ENCODE measurements at regions of chr1 and their contacts with region 1.

Region 1: DNA sequence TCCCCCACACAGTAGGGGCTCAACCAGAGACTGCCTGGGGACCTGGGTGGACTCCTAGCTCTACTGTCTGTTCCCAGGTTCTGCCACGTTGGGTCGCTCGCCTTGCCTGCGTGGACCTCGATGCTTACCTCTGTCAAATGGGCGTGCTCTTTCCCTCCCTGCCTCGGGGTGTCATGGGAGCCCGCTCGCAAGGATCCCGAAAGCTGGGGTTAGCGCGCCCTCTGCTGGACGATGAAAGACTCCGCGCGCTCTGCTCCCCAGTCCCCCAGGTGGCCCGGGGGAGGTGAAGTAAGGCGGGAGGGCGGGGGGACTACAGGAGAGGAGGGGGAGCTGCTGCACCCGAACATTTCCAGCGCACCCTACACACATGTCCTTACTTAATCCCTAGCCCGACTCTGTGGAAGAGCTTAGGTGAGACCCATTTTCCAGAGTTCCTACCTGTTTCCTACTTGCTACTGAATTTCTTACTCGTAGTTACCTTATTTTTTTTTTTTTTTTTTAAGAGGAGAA is 2.3 kb upstream of the BSND start:
- DNase-seq: peak; percentile 57 to 79
- ATAC-seq: peak; percentile 52 to 86 (median 78)
- H3K4me3 ChIP-seq: peak overlapping the region in 1 of 10 donors; percentile 5
- H3K27ac ChIP-seq: no peak overlapping the region
- H3K4me1 ChIP-seq: peaks cover 0 to 11% (median 5%) of the 10 kb centered on the region in 9 donors
- H3K27me3 ChIP-seq: peaks cover 17 to 59% (median 46%) of the 10 kb centered on the region in 7 donors
- CTCF ChIP-seq: peak; percentile 48 to 84 (median 74)

Region 2: DNA sequence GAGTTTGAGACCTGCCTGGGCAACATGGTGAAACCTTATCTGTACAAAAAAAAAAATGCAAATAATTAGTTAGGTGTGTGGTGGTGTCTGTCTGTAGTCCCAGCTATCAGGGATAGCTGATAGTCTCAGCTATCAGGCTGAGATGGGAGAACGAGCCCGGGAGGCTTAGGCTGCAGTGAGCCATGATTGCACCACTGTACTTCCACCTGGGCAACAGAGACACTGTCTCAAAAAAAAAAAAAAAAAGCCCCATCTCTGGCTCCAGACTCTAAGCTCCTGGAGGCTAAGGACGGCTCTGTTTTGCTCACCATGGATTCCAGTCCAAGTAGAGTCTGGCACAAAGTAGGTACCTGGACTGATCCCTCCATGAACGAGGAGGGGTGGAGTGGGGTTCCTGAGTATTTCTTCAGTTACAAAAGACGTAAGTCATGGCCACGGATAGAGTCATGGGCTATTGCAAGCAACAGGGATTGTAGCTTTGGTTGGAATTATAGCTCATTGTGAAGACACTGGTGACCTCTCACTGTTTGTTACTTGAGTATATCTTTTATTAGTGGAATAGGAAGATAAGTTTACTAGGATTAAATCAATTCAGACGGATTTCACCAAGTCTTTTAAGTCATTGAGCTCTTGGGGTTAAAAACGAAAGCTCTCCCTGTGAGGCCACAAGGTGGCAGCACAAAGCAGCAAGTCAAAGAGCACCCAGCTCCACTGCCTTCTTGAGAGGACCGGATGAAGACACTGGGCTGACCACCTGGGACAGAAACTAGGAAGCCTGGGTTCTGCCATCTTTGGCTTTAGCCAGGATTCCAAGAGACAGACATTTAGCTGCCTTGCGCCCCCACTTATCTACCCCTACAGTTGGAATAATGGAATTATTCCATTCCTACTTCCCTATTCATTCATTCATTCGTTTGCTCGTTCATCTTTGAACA is 51.5 kb before region 1 on chr1:
- intact Hi-C with region 1: loop called in 9 of 10 experiments (anchors 1 to 5 kb)
- DNase-seq: peak; percentile 52 to 69
- ATAC-seq: peak in 7 of 8 donors; percentile 71 to 85 (median 77)
- H3K4me3 ChIP-seq: peak overlapping the region in 1 of 10 donors; percentile 24
- H3K27ac ChIP-seq: no peak overlapping the region
- H3K4me1 ChIP-seq: peaks cover 0 to 10% (median 0%) of the 10 kb centered on the region in 9 donors
- H3K27me3 ChIP-seq: no peaks in the 10 kb centered on the region
- CTCF ChIP-seq: peak; percentile 61 to 90 (median 85)

Region 3: DNA sequence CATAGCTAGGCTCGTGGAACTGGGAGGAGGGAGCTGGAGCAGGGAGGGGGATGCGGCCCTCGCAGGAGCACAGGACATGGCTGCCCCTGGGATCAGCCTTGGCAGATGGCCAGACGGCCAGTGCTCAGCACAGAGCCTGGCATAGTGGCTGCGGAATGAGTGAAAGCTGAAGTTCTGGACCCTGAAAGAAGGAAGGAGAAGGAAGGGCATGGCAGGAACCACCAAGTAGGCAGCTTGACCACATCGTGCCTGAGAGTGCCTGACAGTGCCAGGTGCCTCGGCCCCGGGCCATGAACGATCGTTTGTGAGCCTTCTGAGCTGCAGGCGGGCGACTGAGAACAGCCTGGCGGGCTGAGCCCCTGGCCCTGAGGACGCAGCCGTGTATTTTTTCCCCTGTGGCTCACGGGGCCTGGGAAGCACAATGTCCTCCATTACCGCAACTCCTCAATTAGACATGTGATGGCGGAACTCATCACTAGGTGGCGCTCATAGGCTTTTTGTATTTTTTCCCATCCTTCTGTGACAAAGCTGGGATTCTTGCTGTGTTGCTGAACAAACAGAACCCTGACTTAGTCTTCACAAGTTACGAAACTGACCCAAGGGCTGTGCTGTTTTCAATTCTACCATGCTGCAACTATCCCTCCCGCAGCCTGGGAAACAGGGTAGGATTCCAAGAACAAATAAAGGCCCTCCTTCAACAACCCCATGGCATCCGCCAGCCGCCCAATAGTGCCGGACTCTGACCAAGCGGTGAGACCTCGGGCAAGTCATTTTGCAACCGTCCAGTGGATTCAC is 45.8 kb before region 1 on chr1:
- intact Hi-C with region 1: loop called (anchors 1 to 5 kb)
- DNase-seq: peak; percentile 55 to 74
- ATAC-seq: peak; percentile 78 to 90 (median 86)
- H3K4me3 ChIP-seq: peak overlapping the region in 8 of 10 donors; percentile 3 to 47 (median 34)
- H3K27ac ChIP-seq: peak overlapping the region in 6 of 10 donors; percentile 21 to 71 (median 54)
- H3K4me1 ChIP-seq: peaks cover 0 to 16% (median 8%) of the 10 kb centered on the region in 9 donors
- H3K27me3 ChIP-seq: no peaks in the 10 kb centered on the region
- CTCF ChIP-seq: peak; percentile 60 to 84 (median 80)

Region 4: GRCh38 chr1:55318116-55318817 is 321.9 kb after region 1 on chr1:
- intact Hi-C with region 1: no loop called
- DNase-seq: peak in 1 of 2 donors; percentile 54
- ATAC-seq: peak; percentile 38 to 89 (median 80)
- H3K4me3 ChIP-seq: no peak overlapping the region
- H3K27ac ChIP-seq: peak overlapping the region in 6 of 10 donors; percentile 10 to 76 (median 53)
- H3K4me1 ChIP-seq: peaks cover 0 to 40% (median 18%) of the 10 kb centered on the region in 9 donors
- H3K27me3 ChIP-seq: no peaks in the 10 kb centered on the region
- CTCF ChIP-seq: no peak

Measured in heart right ventricle (tissue), 16 donors.